Ascending aorta (tissue), 2 donors: ENCODE measurements at regions of chr11 and their contacts with region 1.

Region 1: DNA sequence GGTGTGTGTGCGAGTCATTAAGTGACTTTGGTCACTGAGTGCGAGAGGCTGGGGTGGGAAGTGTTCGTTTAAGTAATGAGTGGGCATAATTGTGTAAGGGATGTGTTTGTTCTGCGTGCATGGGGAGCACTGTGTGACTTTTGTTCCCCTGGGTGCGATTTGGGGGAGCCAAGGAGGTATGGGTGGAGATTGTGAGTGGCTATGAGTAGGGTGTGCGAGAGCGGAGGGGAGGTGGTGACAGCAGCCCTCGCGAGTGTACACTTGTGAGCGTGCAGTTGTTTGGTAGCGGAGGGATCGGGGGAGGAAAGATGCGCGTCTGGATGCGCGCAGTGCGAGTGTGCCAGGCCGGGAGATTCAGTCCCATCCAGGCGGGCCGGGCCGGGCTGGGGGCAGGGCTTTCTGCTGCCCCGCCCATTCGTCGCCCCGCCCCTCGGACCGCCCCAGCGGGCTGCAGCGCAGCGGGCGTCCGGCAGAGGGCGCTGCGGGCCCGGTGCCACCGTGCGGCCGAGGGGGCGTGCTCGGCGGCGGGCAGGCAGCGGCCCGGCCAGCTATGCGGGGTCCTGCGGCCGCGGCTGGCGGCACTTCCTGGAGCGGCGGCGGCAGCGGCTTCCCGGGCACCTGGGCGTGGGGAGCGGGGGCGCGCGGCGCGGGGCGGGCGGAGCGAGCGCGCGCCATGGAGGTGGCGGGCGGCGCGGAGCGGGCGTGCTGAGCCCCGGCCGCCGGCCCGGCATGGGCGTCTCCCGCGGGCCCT is at the start of gene DGKZ:
- DNase-seq: peak; percentile 47 to 92
- H3K4me3 ChIP-seq: peak within 1 kb of the TSS; percentile 73 to 96
- H3K27ac ChIP-seq: peak within 1 kb of the TSS in 1 of 2 donors; percentile 37
- H3K4me1 ChIP-seq: peaks cover 9 to 14% of the 10 kb centered on the region in 2 donors
- H3K27me3 ChIP-seq: no peaks in the 10 kb centered on the region
- CTCF ChIP-seq: peak; percentile 43 to 100 (median 59)
- total RNA-seq, gene DGKZ: 123 TPM

Region 2: GRCh38 chr11:46290598-46291309 is 56.3 kb before region 1 on chr11:
- intact Hi-C with region 1: no loop called
- DNase-seq: peak in 1 of 2 donors; percentile 83
- H3K4me3 ChIP-seq: no peak overlapping the region
- H3K27ac ChIP-seq: no peak overlapping the region
- H3K4me1 ChIP-seq: peaks cover 0 to 14% of the 10 kb centered on the region in 2 donors
- H3K27me3 ChIP-seq: no peaks in the 10 kb centered on the region
- CTCF ChIP-seq: no peak

Region 3: GRCh38 chr11:46367244-46367915 is 20.3 kb after region 1 on chr11:
- intact Hi-C with region 1: loop called (anchors 1 kb)
- DNase-seq: no peak
- H3K4me3 ChIP-seq: no peak overlapping the region
- H3K27ac ChIP-seq: no peak overlapping the region
- H3K4me1 ChIP-seq: peaks cover 9 to 13% of the 10 kb centered on the region in 2 donors
- H3K27me3 ChIP-seq: no peaks in the 10 kb centered on the region
- CTCF ChIP-seq: peak; percentile 85 to 90 (median 87)